Naive thymus-derived CD4-positive, alpha-beta T cell (primary cell): ENCODE measurements at regions of chr9 and their contacts with region 1.

Region 1: GRCh38 chr9:92986176-92987085 is 39.1 kb downstream of the FGD3 start:
- DNase-seq: peak in 7 of 9 donors; percentile 52 to 66 (median 57)
- ATAC-seq: peak; percentile 75
- H3K4me3 ChIP-seq: no peak overlapping the region
- H3K4me3 Mint-ChIP-seq: peak overlapping the region; percentile 34 to 71 (median 62)
- H3K27ac ChIP-seq: peak overlapping the region; percentile 59
- H3K27ac Mint-ChIP-seq: peak overlapping the region; percentile 56 to 95 (median 86)
- H3K4me1 ChIP-seq: peaks cover 65 to 71% of the 10 kb centered on the region in 2 donors
- H3K4me1 Mint-ChIP-seq: peaks cover 66 to 93% (median 89%) of the 10 kb centered on the region in 7 donors
- H3K27me3 ChIP-seq: no peaks in the 10 kb centered on the region
- H3K27me3 Mint-ChIP-seq: no peaks in the 10 kb centered on the region

Region 2: DNA sequence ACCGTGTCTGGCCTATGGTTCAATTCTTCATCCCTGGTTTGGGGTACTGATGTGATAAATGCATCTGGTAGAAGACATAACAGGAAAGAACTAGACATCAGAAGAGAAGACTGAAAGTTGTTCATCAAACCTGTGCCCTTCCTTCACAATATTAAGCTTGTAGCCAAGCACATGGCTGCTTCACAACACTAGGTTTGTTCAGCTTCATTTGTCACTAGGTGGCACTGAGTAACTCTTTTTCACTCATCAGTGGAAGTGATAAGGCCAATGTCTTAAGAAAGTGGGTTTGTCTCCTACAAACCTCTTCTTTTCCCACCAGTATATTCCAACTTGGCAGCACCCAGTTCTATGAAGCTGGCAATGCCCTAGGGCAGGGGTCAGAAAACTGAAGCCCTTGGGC is 135.5 kb before region 1 on chr9:
- CTCF ChIA-PET with region 1: interaction called, 3 read pairs
- POLR2A ChIA-PET with region 1: no interaction called
- intact Hi-C with region 1: loop called in 1 of 2 experiments (anchors 1 kb)
- DNase-seq: peak in 7 of 9 donors; percentile 22 to 46 (median 27)
- ATAC-seq: no peak
- H3K4me3 ChIP-seq: no peak overlapping the region
- H3K4me3 Mint-ChIP-seq: no peak overlapping the region
- H3K27ac ChIP-seq: no peak overlapping the region
- H3K27ac Mint-ChIP-seq: peak overlapping the region in 3 of 9 donors; percentile 8 to 84 (median 42)
- H3K4me1 ChIP-seq: peaks cover 0 to 4% of the 10 kb centered on the region in 2 donors
- H3K4me1 Mint-ChIP-seq: peaks cover 0 to 17% (median 6%) of the 10 kb centered on the region in 7 donors
- H3K27me3 ChIP-seq: no peaks in the 10 kb centered on the region
- H3K27me3 Mint-ChIP-seq: no peaks in the 10 kb centered on the region

Region 3: DNA sequence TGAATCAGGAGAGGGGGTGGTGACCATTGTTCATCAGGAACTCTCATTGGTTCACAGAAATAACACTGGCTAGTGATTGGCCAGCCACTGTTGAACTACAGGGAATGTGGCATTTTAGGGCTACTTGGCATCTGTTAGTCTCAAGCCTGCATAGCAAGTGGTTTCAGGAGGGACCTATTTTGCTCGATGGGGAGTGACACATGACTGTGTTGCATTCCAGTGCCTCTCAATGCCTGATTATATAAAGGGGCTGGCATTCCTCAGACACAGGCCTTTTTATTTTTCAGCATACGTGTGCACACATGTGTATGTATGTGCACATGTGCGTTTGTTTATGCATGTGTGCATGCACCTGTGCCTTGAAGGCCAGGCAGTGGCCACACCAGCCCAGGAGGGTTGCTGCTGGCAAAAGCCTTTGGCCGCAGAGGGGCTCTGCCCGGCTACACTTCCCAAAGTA is 15.9 kb before region 1 on chr9:
- CTCF ChIA-PET with region 1: interaction called, 4 read pairs
- POLR2A ChIA-PET with region 1: interaction called, 45 read pairs
- intact Hi-C with region 1: loop called in 1 of 2 experiments (anchors 1 kb)
- DNase-seq: no peak
- ATAC-seq: no peak
- H3K4me3 ChIP-seq: peak overlapping the region; percentile 34
- H3K4me3 Mint-ChIP-seq: peak overlapping the region; percentile 86 to 98 (median 93)
- H3K27ac ChIP-seq: peak overlapping the region; percentile 85
- H3K27ac Mint-ChIP-seq: peak overlapping the region; percentile 89 to 99 (median 98)
- H3K4me1 ChIP-seq: peaks cover 71 to 79% of the 10 kb centered on the region in 2 donors
- H3K4me1 Mint-ChIP-seq: peaks cover 67 to 84% (median 82%) of the 10 kb centered on the region in 7 donors
- H3K27me3 ChIP-seq: no peaks in the 10 kb centered on the region
- H3K27me3 Mint-ChIP-seq: no peaks in the 10 kb centered on the region